Naive thymus-derived CD8-positive, alpha-beta T cell (primary cell): ENCODE measurements at regions of chr7 and their contacts with region 1.

Region 1: GRCh38 chr7:99558306-99559174 is at the start of gene ZNF655:
- DNase-seq: peak; percentile 82 to 98 (median 95)
- ATAC-seq: peak; percentile 85
- H3K4me3 Mint-ChIP-seq: peak within 1 kb of the TSS; percentile 91 to 100 (median 99)
- H3K27ac Mint-ChIP-seq: peak within 1 kb of the TSS; percentile 98 to 100 (median 100)
- H3K4me1 Mint-ChIP-seq: peaks cover 31 to 71% (median 61%) of the 10 kb centered on the region in 4 donors
- H3K27me3 Mint-ChIP-seq: no peaks in the 10 kb centered on the region
- polyA plus RNA-seq, gene ZNF655: 70.3 to 86.3 (median 74.3) TPM

Region 2: GRCh38 chr7:99438573-99439480 is 119.7 kb before region 1 on chr7 and contains the starts of genes CPSF4 and PTCD1:
- POLR2A ChIA-PET with region 1: interaction called, 10 read pairs
- DNase-seq: peak; percentile 72 to 91 (median 80)
- ATAC-seq: peak; percentile 83 to 89
- H3K4me3 Mint-ChIP-seq: peak within 1 kb of the TSS; percentile 90 to 99 (median 96)
- H3K27ac Mint-ChIP-seq: peak within 1 kb of the TSS; percentile 91 to 98 (median 96)
- H3K4me1 Mint-ChIP-seq: peaks cover 22 to 50% (median 43%) of the 10 kb centered on the region in 4 donors
- H3K27me3 Mint-ChIP-seq: no peaks in the 10 kb centered on the region
- polyA plus RNA-seq, gene CPSF4: 22.9 to 31.3 (median 28.1) TPM
- polyA plus RNA-seq, gene PTCD1: 2.0 to 3.9 (median 3.2) TPM

Region 3: DNA sequence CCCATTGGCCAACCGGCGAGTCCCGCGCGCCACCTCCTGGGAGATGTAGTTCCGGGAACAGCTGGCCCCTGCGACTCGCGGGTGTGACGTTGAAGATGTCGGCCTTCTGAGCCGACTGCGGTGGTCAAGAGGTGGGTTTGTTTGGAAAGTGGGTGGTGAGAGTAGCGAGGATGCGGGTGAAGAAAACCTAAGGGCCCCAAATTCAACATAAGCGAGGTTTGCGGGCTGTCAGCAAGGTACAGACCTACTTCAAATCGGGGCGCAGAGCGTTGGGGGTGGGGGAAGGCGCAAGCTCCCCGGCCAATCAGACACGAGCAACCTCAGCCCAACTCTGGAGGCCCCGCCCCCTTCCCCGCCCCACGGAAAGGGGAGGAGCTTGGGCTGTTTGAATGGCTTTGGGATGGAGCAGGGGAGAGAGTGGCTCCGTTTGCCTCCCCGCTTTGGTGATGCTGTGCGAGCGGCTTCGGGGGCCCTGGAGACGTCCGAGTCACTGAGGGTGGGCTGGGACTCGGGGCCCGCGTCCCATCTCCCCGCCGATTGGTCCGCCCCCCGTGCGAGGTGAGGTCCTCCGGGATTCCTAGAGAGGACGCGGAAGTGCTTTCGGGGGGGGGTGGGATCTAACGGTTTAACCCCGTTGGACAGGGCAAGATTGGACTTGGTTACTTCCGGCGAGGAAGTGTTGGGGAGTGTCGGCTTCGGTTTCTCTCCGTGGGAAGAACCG is 53.8 kb before region 1 on chr7 and contains the start of gene ZKSCAN5:
- POLR2A ChIA-PET with region 1: interaction called, 71 read pairs
- DNase-seq: peak; percentile 93 to 99 (median 96)
- ATAC-seq: peak; percentile 84 to 85
- H3K4me3 Mint-ChIP-seq: peak within 1 kb of the TSS; percentile 83 to 100 (median 98)
- H3K27ac Mint-ChIP-seq: peak within 1 kb of the TSS; percentile 96 to 100 (median 98)
- H3K4me1 Mint-ChIP-seq: peaks cover 15 to 48% (median 31%) of the 10 kb centered on the region in 4 donors
- H3K27me3 Mint-ChIP-seq: no peaks in the 10 kb centered on the region
- polyA plus RNA-seq, gene ZKSCAN5: 3.0 to 5.7 (median 3.9) TPM

Region 4: GRCh38 chr7:99616359-99617191 is 58.0 kb after region 1 on chr7 and contains the start of gene ZSCAN25:
- POLR2A ChIA-PET with region 1: interaction called, 54 read pairs
- DNase-seq: peak; percentile 70 to 93 (median 83)
- ATAC-seq: peak; percentile 96
- H3K4me3 Mint-ChIP-seq: peak within 1 kb of the TSS; percentile 95 to 99 (median 96)
- H3K27ac Mint-ChIP-seq: peak within 1 kb of the TSS; percentile 92 to 99 (median 98)
- H3K4me1 Mint-ChIP-seq: peaks cover 18 to 52% (median 47%) of the 10 kb centered on the region in 4 donors
- H3K27me3 Mint-ChIP-seq: no peaks in the 10 kb centered on the region
- polyA plus RNA-seq, gene ZSCAN25: 9.2 to 19.0 (median 16.2) TPM

Region 5: GRCh38 chr7:99767662-99768061 is 209.1 kb after region 1 on chr7:
- POLR2A ChIA-PET with region 1: no interaction called
- DNase-seq: no peak
- ATAC-seq: no peak
- H3K4me3 Mint-ChIP-seq: no peak overlapping the region
- H3K27ac Mint-ChIP-seq: no peak overlapping the region
- H3K4me1 Mint-ChIP-seq: peaks cover 0 to 13% (median 0%) of the 10 kb centered on the region in 4 donors
- H3K27me3 Mint-ChIP-seq: peaks cover 13 to 36% (median 32%) of the 10 kb centered on the region in 5 donors

Region 6: GRCh38 chr7:99794585-99795502 is 236.3 kb after region 1 on chr7:
- POLR2A ChIA-PET with region 1: no interaction called
- DNase-seq: no peak
- ATAC-seq: no peak
- H3K4me3 Mint-ChIP-seq: no peak overlapping the region
- H3K27ac Mint-ChIP-seq: peak overlapping the region in 3 of 10 donors; percentile 13 to 38 (median 25)
- H3K4me1 Mint-ChIP-seq: no peaks in the 10 kb centered on the region
- H3K27me3 Mint-ChIP-seq: peaks cover 0 to 13% (median 3%) of the 10 kb centered on the region in 5 donors